Astrocyte of the cerebellum (primary cell): ENCODE measurements at regions of chr7 and their contacts with region 1.

Region 1: DNA sequence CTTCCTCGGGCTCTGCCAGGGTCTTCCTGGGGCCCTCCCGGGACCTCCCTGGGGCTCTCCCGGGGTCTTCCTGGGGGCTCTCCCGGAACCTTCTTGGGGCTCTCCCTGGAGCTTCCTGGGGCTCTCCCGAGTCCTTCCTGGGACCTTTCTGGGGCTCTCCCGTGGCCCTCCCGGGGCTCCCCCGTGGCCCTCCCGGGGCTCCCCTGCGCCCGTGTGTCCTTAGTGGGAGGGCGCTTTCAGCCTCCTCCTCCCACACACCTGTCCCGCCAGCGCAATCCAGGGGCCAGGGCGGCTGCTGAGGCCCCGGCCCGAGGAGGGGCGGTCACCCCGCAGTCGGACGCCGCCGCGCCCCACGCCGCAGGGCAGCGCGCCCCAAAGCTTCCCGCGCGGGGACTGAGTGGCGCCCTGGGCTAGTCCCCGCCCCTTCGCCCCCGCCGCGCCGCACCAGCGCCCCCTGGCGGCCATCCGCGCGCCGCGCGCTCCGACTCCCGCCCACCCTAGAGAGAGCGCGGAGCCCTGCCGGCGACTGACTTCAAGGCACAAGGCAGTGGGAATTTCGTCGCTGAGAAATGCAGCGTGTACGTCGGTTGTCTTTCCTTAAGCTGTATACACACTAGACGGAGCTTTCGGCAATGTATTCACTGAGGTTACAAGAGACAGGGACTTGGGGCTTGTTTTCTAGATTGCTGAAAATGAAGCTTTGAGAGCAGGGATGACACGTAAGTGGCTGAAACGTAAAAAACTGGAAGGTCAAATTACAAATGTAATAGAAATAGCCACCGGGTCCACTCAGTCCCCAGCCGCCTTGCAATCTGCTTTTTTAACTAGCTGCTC is 47.1 kb downstream of the INSIG1 start:
- DNase-seq: peak; percentile 12
- H3K4me3 ChIP-seq: peak overlapping the region; percentile 24
- CTCF ChIP-seq: peak; percentile 72

Region 2: DNA sequence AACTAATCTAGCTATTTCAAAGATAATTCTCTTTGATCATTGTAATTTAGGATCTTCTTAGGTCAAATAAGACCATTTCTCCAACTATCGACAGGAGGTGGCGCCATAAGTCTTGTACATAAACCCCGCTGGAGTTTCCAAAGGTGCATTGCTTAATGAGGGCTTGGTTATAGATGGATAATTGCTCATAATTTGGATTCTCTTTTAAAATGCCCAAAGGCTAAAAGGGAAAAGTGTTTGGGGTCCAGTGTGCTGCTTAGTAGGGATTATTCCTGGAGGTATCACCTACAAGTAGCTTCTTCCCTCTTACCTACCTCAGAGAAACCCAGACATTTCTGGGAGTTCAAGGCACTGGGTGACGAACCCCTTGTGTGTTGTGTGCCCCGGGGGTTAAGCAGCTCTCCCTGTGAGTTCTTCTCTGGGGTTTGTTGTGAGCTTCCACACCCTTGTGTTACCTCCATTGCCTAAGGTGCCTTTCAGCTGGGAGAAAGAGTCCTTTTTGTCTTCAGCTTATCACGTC is 417.1 kb before region 1 on chr7:
- in situ Hi-C with region 1: loop called (anchors 25 kb)
- DNase-seq: peak; percentile 85
- H3K4me3 ChIP-seq: peak overlapping the region; percentile 15
- CTCF ChIP-seq: peak; percentile 57

Region 3: DNA sequence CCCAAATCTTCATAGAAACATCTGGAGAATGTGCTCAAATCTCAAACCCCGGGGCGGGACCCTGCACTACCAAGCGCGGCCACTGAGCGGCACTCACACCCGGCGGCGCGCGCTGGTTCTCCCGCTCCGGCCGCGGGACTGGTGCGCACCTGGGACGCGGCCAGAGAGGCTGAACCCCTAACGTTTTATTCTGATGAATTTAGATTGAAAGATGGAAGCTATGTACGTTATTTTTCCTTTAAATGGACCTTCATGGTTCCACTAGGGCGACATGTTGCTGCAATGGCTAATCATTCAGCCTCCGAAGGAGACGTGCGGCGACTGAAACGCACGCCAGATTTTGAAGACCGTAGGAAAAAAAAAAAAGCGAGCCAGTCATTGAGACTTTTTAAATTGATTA is 154.1 kb before region 1 on chr7:
- in situ Hi-C with region 1: loop called (anchors 5 kb)
- DNase-seq: no peak
- H3K4me3 ChIP-seq: no peak overlapping the region
- CTCF ChIP-seq: peak; percentile 98

Region 4: DNA sequence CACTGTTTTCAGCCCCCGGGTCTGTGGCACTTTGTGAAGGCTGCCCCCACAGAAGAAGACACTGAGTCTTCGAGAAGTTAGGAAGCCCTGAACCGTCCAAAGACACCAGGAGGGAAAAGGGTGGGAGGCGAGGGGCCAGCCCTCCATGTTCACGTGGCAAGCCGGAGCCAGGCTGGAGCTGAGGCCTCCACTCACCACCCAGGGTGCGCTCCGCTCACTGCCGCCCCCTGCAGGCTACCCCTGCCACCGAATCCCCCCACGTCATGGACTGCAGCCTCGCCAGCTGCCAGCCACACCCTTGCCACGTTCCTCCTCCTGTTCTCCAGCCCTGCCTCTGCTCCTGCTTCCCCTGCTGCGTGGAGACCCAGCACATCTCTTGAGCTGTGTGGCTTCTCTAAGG is 54.1 kb after region 1 on chr7:
- in situ Hi-C with region 1: no loop called
- DNase-seq: no peak
- H3K4me3 ChIP-seq: no peak overlapping the region
- CTCF ChIP-seq: no peak